Sciatic nerve (tissue), 2 donors: ENCODE measurements at regions of chr12 and their contacts with region 1.

Region 1: DNA sequence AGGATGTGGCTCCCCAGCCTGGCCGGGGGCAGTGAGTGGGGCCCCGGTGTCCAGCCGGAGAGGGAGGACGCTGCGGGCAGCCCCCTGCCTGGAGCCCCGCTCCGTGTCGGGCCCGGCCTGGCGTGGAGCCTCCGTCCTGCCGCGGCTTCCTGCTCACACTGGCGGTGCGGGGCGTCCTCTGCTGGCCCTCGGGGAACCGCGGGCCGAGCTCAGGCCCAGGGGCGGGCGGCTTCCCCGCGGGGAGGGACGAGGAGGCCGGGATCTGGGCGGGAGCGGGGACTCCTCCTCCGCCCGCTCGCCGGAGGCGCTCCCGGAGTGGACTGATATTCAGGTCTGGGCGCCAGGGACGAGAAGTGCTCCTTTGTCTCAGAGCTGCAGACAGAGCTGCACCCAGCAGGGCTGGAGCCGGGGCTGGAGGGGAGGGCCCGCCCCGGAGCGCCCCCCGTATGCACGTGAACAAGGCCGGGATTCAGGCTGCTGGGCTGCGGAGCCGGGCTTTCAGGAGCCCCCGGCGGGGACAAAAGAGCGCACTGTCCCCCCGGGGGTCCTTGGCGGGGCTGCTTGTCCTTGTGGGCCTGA is 2.2 kb downstream of the MMP17 start:
- DNase-seq: peak; percentile 90
- ATAC-seq: peak; percentile 90

Region 2: GRCh38 chr12:131608740-131609690 is 221.4 kb before region 1 on chr12:
- intact Hi-C with region 1: loop called (anchors 10 kb)
- DNase-seq: peak; percentile 91
- ATAC-seq: peak; percentile 96